Posterior cingulate gyrus (tissue), 11 donors: ENCODE measurements at regions of chr9 and their contacts with region 1.

Region 1: DNA sequence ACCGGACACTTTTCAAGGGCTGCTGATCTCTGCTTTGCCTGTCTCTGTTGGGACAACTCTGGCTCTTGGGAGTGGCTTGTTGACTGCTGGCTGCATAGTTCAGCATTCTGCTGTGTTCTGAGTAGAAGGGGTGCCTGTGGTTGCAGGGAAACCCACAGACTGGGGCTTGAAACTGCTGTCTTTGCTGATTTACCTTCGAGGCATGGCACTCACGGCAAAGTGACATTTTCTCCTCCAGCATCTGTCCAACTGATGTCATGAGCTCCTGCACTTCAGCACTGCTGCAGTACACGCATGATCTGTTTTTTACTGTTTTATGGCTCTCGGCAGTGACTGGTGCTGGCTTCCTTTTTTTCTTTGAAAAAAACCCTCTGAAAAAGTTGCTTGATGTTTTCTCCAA is 69.2 kb downstream of the SPATA31D1 start:
- DNase-seq: no peak

Region 2: DNA sequence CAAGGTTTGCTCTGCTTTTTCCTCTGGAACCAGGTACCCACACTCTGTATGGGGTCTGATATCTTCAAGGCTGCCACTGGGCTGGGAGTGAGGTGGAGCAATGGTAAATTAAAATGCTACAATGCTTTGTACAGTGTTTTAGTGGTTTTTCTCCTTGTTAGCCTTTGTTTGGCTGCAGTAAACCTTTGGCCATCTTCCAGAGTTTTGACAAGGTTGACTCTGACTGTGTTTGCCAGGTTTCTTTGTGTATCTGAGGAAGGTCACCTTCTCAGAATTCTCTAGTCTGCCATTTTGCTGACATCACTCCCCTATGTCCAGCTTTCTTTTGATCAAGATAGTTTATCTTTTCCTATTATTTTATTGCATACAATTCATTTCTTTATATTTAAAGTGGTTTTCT is 58.0 kb before region 1 on chr9:
- intact Hi-C with region 1: loop called (anchors 5 kb)
- DNase-seq: no peak